ENCODE measurements at regions of chr2 and their contacts with region 1.

Region 1: GRCh38 chr2:25851740-25852503 is 26.4 kb downstream of the ASXL2 start:
- DNase-seq: peak; percentile 60
- ATAC-seq: peak; percentile 86
- H3K4me3 Mint-ChIP-seq: peak overlapping the region; percentile 66
- H3K27ac Mint-ChIP-seq: peak overlapping the region; percentile 84
- H3K4me1 Mint-ChIP-seq: peaks cover 43% of the 10 kb centered on the region
- H3K27me3 Mint-ChIP-seq: no peaks in the 10 kb centered on the region

Region 2: GRCh38 chr2:25700221-25700660 is 151.7 kb before region 1 on chr2:
- CTCF ChIA-PET with region 1: interaction called, 20 read pairs
- POLR2A ChIA-PET with region 1: no interaction called
- DNase-seq: peak; percentile 53
- ATAC-seq: peak; percentile 51
- H3K4me3 Mint-ChIP-seq: no peak overlapping the region
- H3K27ac Mint-ChIP-seq: no peak overlapping the region
- H3K4me1 Mint-ChIP-seq: no peaks in the 10 kb centered on the region
- H3K27me3 Mint-ChIP-seq: peaks cover 3% of the 10 kb centered on the region

Region 3: GRCh38 chr2:25817630-25818029 is 34.3 kb before region 1 on chr2:
- CTCF ChIA-PET with region 1: interaction called, 19 read pairs
- POLR2A ChIA-PET with region 1: no interaction called
- DNase-seq: no peak
- ATAC-seq: peak; percentile 69
- H3K4me3 Mint-ChIP-seq: peak overlapping the region; percentile 43
- H3K27ac Mint-ChIP-seq: peak overlapping the region; percentile 73
- H3K4me1 Mint-ChIP-seq: peaks cover 52% of the 10 kb centered on the region
- H3K27me3 Mint-ChIP-seq: no peaks in the 10 kb centered on the region

Region 4: DNA sequence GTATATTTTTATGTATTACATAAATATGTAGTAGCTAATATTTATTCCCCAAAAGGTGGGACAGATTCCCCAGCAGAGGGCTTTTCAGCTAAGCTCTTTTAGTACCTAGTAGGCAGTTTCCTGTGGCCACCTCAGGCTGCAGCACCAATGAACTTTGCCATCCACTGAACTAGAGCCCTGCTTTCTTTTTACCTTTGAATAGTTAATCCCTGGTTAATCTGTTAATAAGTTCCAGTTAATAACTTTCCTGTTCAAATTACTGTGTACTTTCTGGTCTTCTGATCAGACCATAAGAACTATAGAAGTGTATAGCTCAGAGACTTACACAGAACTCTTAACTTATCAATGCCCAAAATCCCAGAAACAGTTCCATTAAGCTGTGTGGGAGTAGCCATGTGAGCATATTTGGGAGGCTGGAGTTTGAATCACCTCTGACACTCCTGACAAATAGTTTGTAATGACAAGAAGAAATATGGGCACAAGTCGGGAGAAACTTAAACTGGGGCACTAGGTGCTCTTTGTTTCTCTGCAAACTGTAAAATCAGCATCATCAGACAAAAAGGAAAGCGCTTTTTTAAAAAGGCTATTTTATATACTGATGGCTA is 13.7 kb before region 1 on chr2:
- CTCF ChIA-PET with region 1: interaction called, 33 read pairs
- POLR2A ChIA-PET with region 1: no interaction called
- DNase-seq: no peak
- ATAC-seq: no peak
- H3K4me3 Mint-ChIP-seq: no peak overlapping the region
- H3K27ac Mint-ChIP-seq: no peak overlapping the region
- H3K4me1 Mint-ChIP-seq: peaks cover 30% of the 10 kb centered on the region
- H3K27me3 Mint-ChIP-seq: no peaks in the 10 kb centered on the region

Region 5: DNA sequence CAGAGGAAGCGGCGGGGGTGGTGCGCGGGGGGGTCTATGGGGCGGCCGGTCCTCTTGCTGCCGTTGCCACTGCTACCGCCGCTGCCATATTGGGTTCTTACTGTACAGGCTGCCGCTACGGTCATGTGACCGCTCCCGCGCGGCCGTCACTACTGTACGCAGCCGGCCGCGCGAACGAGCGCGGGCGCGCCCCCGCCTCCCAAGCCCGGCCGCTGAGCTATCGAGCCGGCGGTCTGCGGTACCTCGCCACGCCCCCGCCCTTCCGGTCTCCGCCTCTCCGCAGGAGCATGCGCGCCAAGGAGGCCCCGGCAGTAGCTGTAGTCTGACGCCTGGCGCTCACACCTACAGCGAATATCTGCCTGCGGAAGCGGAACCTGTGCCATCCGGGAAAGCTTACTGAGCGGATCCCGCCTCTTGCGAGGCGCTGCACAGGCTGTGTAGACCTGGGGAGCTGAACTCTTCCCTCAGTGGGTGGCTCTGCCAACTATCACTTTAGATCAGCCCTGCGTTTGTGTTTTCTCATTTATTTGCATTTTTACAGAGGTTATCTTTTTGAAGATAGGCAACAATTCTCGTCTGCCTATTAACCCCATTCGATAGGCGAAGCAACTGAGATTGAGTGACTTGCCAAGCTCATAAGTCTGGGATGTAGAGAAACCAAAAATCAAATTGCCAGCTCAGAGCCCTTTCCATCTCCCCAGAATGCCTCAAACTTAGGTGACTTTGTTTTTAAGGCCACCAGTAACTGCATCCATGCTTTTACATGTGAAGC is 26.6 kb after region 1 on chr2 and contains the start of gene ASXL2:
- CTCF ChIA-PET with region 1: interaction called, 47 read pairs
- POLR2A ChIA-PET with region 1: interaction called, 22 read pairs
- DNase-seq: peak; percentile 97
- ATAC-seq: peak; percentile 91
- H3K4me3 Mint-ChIP-seq: peak within 1 kb of the TSS; percentile 97
- H3K27ac Mint-ChIP-seq: peak within 1 kb of the TSS; percentile 99
- H3K4me1 Mint-ChIP-seq: peaks cover 30% of the 10 kb centered on the region
- H3K27me3 Mint-ChIP-seq: no peaks in the 10 kb centered on the region
- total RNA-seq, gene ASXL2: 44.0 to 45.0 TPM

Region 6: GRCh38 chr2:25933622-25934021 is 81.7 kb after region 1 on chr2:
- CTCF ChIA-PET with region 1: no interaction called
- POLR2A ChIA-PET with region 1: no interaction called
- DNase-seq: no peak
- ATAC-seq: no peak
- H3K4me3 Mint-ChIP-seq: no peak overlapping the region
- H3K27ac Mint-ChIP-seq: no peak overlapping the region
- H3K4me1 Mint-ChIP-seq: no peaks in the 10 kb centered on the region
- H3K27me3 Mint-ChIP-seq: no peaks in the 10 kb centered on the region

Region 7: DNA sequence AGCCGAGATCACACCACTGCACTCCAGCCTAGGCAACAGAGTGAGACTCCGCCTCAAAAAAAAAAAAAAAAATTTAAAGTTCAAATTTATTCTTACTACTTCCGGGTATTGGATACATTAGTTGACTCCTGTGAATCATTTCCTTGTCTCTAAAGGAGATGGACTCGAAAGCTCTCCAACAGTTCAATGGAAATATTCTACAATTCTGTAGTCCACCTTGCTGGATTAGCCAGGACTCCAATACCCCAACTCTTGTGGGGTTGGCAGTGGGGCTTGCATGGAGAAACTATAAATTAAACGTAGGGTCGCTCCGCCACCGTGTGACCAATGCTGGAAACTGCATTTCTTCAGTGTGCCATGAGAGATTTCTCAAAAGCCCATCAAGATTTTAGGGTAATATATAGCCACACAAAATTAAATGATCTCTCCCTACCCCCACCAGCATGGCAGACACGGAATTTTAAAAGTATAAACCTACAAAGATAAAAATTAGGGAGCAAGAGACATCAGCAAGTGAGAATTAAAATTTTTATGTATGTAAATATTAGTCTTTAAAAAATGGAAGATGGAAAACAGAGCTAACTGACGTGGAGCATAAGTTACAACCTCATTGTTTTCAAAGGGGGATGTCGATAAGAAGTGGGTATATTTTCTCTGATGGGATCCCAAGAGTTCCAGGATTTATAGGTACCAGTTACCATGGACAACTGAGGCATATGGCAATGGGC is 293.2 kb after region 1 on chr2:
- CTCF ChIA-PET with region 1: interaction called, 12 read pairs
- POLR2A ChIA-PET with region 1: no interaction called
- DNase-seq: peak; percentile 78
- ATAC-seq: peak; percentile 68
- H3K4me3 Mint-ChIP-seq: no peak overlapping the region
- H3K27ac Mint-ChIP-seq: no peak overlapping the region
- H3K4me1 Mint-ChIP-seq: peaks cover 2% of the 10 kb centered on the region
- H3K27me3 Mint-ChIP-seq: peaks cover 10% of the 10 kb centered on the region